ENCODE measurements at regions of chr1 and their contacts with region 1.

Region 1: GRCh38 chr1:150281837-150282653 is at the start of gene CIART:
- DNase-seq: peak; percentile 81 to 89 (median 88)
- H3K4me3 ChIP-seq: peak within 1 kb of the TSS; percentile 61 to 80
- H3K4me3 Mint-ChIP-seq: peak within 1 kb of the TSS; percentile 83 to 97 (median 89)
- H3K27ac ChIP-seq: peak within 1 kb of the TSS; percentile 57
- H3K27ac Mint-ChIP-seq: peak within 1 kb of the TSS; percentile 87 to 98 (median 96)
- H3K4me1 ChIP-seq: peaks cover 23% of the 10 kb centered on the region
- H3K4me1 Mint-ChIP-seq: peaks cover 15 to 27% (median 24%) of the 10 kb centered on the region in 4 donors
- H3K27me3 ChIP-seq: no peaks in the 10 kb centered on the region
- H3K27me3 Mint-ChIP-seq: no peaks in the 10 kb centered on the region
- total RNA-seq, gene CIART: 0.67 to 0.94 TPM

Region 2: DNA sequence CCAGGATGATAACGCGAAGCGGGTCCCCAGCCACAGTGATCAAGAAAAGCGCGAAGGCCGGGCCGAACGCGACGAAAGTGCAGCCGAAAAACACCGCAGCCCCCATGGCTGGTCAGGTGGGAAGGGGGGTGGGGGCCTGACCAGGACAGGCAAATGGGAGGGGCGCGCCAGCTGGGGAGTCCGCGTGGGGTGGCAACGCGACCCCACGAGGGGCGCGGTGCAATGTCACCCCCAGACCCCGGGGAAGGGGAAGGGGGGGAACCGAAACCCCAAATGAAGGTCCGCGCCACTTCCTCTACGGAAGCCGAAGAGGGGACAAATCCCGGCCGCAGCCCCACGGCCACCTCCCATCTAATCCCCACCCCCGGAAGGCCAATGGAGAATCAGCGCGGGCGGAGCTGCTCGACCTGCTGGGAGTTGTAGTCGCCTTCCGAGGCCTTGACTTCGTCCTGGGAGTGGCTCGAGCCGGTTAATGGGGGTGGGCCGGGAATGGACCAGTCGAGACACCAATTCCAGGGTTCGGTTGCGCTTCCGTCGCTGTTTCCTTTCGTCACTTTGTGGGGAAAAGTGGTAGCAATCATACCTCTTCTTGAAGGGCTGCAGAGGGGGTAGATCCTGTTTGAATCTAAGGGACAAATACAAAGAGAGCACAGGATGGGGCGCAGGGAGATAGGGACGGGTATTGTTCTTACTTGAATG is 13.2 kb before region 1 on chr1 and contains the start of gene APH1A:
- CTCF ChIA-PET with region 1: interaction called, 4 read pairs
- POLR2A ChIA-PET with region 1: interaction called, 37 read pairs
- intact Hi-C with region 1: loop called (anchors 2 kb)
- DNase-seq: peak; percentile 89 to 93 (median 91)
- H3K4me3 ChIP-seq: peak within 1 kb of the TSS; percentile 83 to 85
- H3K4me3 Mint-ChIP-seq: peak within 1 kb of the TSS; percentile 92 to 99 (median 97)
- H3K27ac ChIP-seq: peak within 1 kb of the TSS; percentile 96
- H3K27ac Mint-ChIP-seq: peak within 1 kb of the TSS; percentile 96 to 99 (median 99)
- H3K4me1 ChIP-seq: peaks cover 24% of the 10 kb centered on the region
- H3K4me1 Mint-ChIP-seq: peaks cover 18 to 35% (median 27%) of the 10 kb centered on the region in 4 donors
- H3K27me3 ChIP-seq: no peaks in the 10 kb centered on the region
- H3K27me3 Mint-ChIP-seq: no peaks in the 10 kb centered on the region
- total RNA-seq, gene APH1A: 118 to 120 TPM

Region 3: DNA sequence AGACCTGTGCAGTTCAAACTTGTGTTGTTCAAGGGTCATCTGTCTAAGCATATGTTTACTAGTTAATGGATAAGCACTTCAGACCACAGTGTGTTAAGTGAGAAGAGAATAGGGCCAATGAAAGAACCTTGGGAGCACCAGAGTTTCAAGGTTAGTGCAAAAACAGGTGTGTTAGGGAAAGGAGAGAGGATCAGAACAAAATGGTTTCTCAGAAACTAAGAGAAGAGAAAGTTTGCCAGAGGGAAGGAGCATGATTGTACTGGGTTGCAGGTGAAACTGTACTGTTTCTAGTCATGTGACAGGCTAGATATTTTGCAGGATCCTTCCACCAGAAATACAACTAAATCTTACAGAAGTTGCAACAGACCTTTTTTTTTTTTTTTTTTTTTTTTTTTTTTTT is 105.2 kb after region 1 on chr1:
- CTCF ChIA-PET with region 1: no interaction called
- POLR2A ChIA-PET with region 1: no interaction called
- intact Hi-C with region 1: no loop called
- DNase-seq: no peak
- H3K4me3 ChIP-seq: no peak overlapping the region
- H3K4me3 Mint-ChIP-seq: peak overlapping the region in 3 of 8 donors; percentile 9 to 43 (median 32)
- H3K27ac ChIP-seq: no peak overlapping the region
- H3K27ac Mint-ChIP-seq: peak overlapping the region in 5 of 7 donors; percentile 2 to 76 (median 28)
- H3K4me1 ChIP-seq: peaks cover 52% of the 10 kb centered on the region
- H3K4me1 Mint-ChIP-seq: peaks cover 37 to 68% (median 45%) of the 10 kb centered on the region in 4 donors
- H3K27me3 ChIP-seq: no peaks in the 10 kb centered on the region
- H3K27me3 Mint-ChIP-seq: no peaks in the 10 kb centered on the region

Measured in CD4-positive, alpha-beta memory T cell (primary cell).